ENCODE measurements at regions of chr11 and their contacts with region 1.

Region 1: GRCh38 chr11:130434521-130435223 is 6.3 kb upstream of the ADAMTS8 start:
- DNase-seq: peak in 3 of 4 donors; percentile 74 to 90 (median 88)
- ATAC-seq: peak; percentile 97
- H3K4me3 ChIP-seq: peak overlapping the region; percentile 35 to 44
- H3K27ac ChIP-seq: peak overlapping the region; percentile 31 to 40
- H3K4me1 ChIP-seq: no peaks in the 10 kb centered on the region
- H3K27me3 ChIP-seq: peaks cover 7 to 29% of the 10 kb centered on the region in 2 donors
- CTCF ChIP-seq: peak; percentile 85

Region 2: DNA sequence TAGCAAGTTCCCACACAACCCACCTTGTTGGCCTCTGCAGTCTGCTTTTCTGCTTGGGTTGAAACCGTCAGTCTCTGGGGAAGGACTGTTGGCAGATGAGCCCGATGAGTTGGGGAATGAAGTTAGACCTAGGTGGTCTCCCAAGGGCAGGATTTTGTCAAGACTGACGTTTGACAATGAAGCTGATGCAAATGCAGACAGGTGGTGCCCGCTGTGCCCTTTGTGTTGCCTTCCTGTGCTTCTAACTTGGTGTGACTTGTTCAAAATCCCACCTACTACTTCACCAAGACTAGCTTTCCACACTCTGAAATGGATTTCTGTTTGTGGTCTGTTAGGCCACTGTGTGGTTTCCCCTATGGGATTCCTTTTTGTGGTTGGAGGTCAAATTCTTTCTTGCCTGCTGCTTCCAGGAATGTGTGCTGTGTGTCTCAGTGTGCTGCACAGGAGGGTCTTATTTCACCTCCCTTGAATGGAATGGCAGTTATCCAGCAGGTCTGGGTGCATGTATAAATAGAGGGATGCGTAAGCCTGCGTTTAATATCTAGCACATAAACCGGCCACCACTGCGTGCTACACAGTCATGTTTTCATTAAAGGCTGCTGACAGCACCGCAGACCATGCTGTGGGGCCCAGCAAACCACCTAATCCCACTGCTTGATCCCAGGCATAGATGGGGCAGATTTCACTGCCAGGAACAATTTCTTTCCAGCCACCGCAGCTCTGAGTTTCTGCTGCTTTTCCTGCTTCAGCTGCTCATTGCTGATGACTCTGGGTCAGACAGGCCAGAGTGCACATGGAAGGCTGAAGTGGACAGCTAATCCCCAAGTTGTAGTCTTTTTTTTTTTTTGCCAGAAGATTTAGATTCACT is 51.1 kb before region 1 on chr11:
- intact Hi-C with region 1: no loop called
- DNase-seq: no peak
- ATAC-seq: no peak
- H3K4me3 ChIP-seq: no peak overlapping the region
- H3K27ac ChIP-seq: no peak overlapping the region
- H3K4me1 ChIP-seq: no peaks in the 10 kb centered on the region
- H3K27me3 ChIP-seq: no peaks in the 10 kb centered on the region
- CTCF ChIP-seq: no peak

Region 3: GRCh38 chr11:130861902-130862860 is 427.5 kb after region 1 on chr11:
- intact Hi-C with region 1: loop called (anchors 2 to 10 kb)
- DNase-seq: peak; percentile 90 to 96 (median 94)
- ATAC-seq: peak; percentile 98
- H3K4me3 ChIP-seq: no peak overlapping the region
- H3K27ac ChIP-seq: no peak overlapping the region
- H3K4me1 ChIP-seq: no peaks in the 10 kb centered on the region
- H3K27me3 ChIP-seq: no peaks in the 10 kb centered on the region
- CTCF ChIP-seq: peak; percentile 99

Measured in left lung (tissue), 14 donors.